ENCODE measurements at regions of chr10 and their contacts with region 1.

Region 1: GRCh38 chr10:119737827-119738226 is 12.0 kb downstream of the INPP5F start:
- DNase-seq: no peak
- H3K4me3 ChIP-seq: 0 out of 4 replicates have a peak overlapping the region, but pooled peaks of 1 of the 2 experiments have one; percentile 11
- H3K27ac ChIP-seq: peak overlapping the region; percentile 73 to 77; a peak in 3 of 4 replicates
- H3K4me1 ChIP-seq: peaks cover 3 to 46% of the 10 kb centered on the region in 2 experiments; a peak in 3 of 4 replicates
- H3K27me3 ChIP-seq: no peaks in the 10 kb centered on the region
- CTCF ChIP-seq: no peak
- EP300 ChIP-seq: no peak
- RAD21 ChIP-seq: no peak

Region 2: DNA sequence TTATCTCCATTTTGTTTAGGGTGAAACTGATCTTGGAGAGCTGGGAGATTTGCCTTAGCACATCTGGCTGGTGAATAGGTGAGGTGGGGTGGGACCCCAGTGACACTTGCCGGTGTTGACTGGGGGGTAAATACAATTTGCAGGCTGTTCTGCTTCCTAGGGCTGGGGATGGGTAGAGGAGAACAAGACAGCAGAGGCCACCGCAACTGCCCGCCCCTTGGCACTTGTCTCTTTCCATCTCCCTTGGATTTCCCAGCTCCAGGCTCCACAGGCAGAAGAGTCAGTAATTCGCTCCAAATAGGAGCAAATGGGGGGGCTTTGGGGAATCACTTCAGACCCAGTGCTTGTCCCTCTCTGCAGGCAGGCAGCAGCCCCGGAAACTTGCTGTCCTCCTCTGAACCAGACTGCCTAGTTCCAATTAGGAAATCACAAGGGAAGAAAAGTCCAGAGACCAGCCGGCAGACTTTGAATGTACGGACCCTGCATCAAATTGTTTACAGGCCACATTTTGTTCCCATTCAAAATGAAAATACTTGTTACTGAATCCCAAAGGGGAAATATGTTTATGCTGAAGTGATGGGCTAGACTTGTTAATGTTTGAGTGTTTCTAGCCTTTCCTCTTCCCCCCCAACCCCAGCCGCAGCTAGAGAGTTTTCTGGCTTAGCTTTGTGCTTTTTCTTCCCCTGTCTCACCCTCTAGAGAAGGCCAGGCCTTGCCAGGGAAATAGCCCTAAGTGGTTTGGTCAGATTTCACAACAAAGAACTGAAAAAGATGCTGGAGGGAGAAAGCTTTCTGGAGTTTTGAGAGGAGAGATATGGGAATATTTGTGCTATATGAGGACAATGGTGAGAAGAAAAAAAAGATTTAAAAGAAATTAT is 22.0 kb before region 1 on chr10:
- CTCF ChIA-PET with region 1: no interaction called
- POLR2A ChIA-PET with region 1: no interaction called
- DNase-seq: peak; percentile 26
- H3K4me3 ChIP-seq: no peak overlapping the region
- H3K27ac ChIP-seq: no peak overlapping the region
- H3K4me1 ChIP-seq: no peaks in the 10 kb centered on the region; a peak in 1 of 4 replicates
- H3K27me3 ChIP-seq: no peaks in the 10 kb centered on the region
- CTCF ChIP-seq: no peak
- EP300 ChIP-seq: no peak
- RAD21 ChIP-seq: no peak

Region 3: GRCh38 chr10:119725828-119726675 is 11.8 kb before region 1 on chr10 and contains the start of gene INPP5F:
- CTCF ChIA-PET with region 1: interaction called, 16 read pairs
- POLR2A ChIA-PET with region 1: interaction called, 4 read pairs
- DNase-seq: peak; percentile 100
- H3K4me3 ChIP-seq: peak within 1 kb of the TSS; percentile 78 to 87
- H3K27ac ChIP-seq: peak within 1 kb of the TSS; percentile 76 to 85
- H3K4me1 ChIP-seq: peaks cover 9 to 23% of the 10 kb centered on the region in 2 experiments; a peak in 3 of 4 replicates
- H3K27me3 ChIP-seq: no peaks in the 10 kb centered on the region
- CTCF ChIP-seq: peak; percentile 31
- EP300 ChIP-seq: no peak; a peak in 1 of 4 replicates
- RAD21 ChIP-seq: no peak
- polyA plus RNA-seq, gene INPP5F: 7.8 and 9.3 TPM in 2 replicates

Measured in SK-N-SH (cell line).